Psoas muscle (tissue), 8 donors: ENCODE measurements at regions of chrX and their contacts with region 1.

Region 1: DNA sequence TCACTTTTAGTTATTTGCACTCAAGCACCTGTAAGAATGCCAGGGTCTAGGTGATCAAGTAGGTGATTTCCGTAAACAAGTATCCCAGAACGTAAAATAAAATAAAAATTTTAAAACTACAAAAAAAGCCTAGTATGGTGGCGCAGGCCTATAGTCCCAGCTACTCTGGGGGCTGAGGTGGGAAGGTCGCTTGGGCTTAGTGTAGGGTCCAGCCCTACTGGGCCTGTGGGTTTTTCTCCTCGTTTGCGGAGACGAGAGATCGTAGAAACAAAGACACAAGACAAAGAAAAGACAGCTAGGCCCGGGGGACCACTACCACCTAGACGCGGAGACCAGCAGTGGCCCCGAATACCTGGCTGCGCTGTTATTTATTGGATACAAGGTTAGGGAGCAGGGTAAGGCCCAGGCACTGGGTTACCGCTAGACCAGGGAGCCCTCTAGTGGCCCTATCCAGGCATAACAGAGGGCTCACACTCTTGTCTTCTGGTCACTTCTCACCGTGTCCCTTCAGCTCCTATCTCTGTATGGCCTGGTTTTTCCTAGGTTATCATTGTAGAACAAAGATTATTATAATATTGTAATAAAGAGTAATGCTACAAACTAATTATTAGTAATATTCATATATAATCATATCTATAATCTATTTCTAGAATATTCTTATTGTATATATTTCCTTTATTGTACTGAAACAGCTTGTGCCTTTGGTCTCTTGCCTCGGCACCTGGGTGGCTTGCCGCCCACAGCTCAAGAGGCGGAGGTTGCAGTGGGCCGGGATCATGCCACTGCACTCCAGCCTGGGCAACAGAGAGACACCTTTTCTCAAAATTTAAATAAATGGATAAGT is 38.4 kb downstream of the SAGE1 start:
- DNase-seq: peak; percentile 25 to 56
- ATAC-seq: peak in 2 of 4 donors; percentile 56 to 65
- H3K4me3 ChIP-seq: no peak overlapping the region
- H3K27ac ChIP-seq: no peak overlapping the region
- H3K4me1 ChIP-seq: no peaks in the 10 kb centered on the region
- H3K27me3 ChIP-seq: no peaks in the 10 kb centered on the region
- CTCF ChIP-seq: peak; percentile 63

Region 2: GRCh38 chrX:135632353-135632752 is 299.5 kb before region 1 on chrX:
- intact Hi-C with region 1: loop called in 1 of 2 experiments (anchors 5 kb)
- DNase-seq: no peak
- ATAC-seq: no peak
- H3K4me3 ChIP-seq: no peak overlapping the region
- H3K27ac ChIP-seq: no peak overlapping the region
- H3K4me1 ChIP-seq: no peaks in the 10 kb centered on the region
- H3K27me3 ChIP-seq: peaks cover 0 to 5% (median 0%) of the 10 kb centered on the region in 3 donors
- CTCF ChIP-seq: no peak